ENCODE measurements at regions of chr1 and their contacts with region 1.

Region 1: GRCh38 chr1:11719313-11720032 is 16.5 kb upstream of the AGTRAP start:
- DNase-seq: peak; percentile 71 to 85 (median 77)
- ATAC-seq: peak; percentile 79
- H3K4me3 ChIP-seq: no peak overlapping the region
- H3K27ac ChIP-seq: no peak overlapping the region
- H3K4me1 ChIP-seq: peaks cover 4 to 13% of the 10 kb centered on the region in 2 experiments; a peak in 4 of 5 replicates
- H3K27me3 ChIP-seq: peaks cover 19 to 25% of the 10 kb centered on the region in 2 experiments; a peak in 4 of 5 replicates
- CTCF ChIP-seq: peak; percentile 94 to 99 (median 98)
- EP300 ChIP-seq: 0 out of 2 replicates have a peak, but pooled peaks have one; percentile 6
- POLR2A ChIP-seq: no peak
- RAD21 ChIP-seq: peak; percentile 98 to 99

Region 2: GRCh38 chr1:11037740-11038182 is 681.7 kb before region 1 on chr1:
- CTCF ChIA-PET with region 1: no interaction called
- POLR2A ChIA-PET with region 1: no interaction called
- in situ Hi-C with region 1: no loop called
- intact Hi-C with region 1: loop called (anchors 10 kb)
- DNase-seq: peak; percentile 83 to 91 (median 85)
- ATAC-seq: peak; percentile 98
- H3K4me3 ChIP-seq: no peak overlapping the region
- H3K27ac ChIP-seq: no peak overlapping the region
- H3K4me1 ChIP-seq: no peaks in the 10 kb centered on the region
- H3K27me3 ChIP-seq: peaks cover 8 to 20% of the 10 kb centered on the region in 2 experiments
- CTCF ChIP-seq: peak; percentile 96 to 99 (median 99)
- EP300 ChIP-seq: no peak
- POLR2A ChIP-seq: no peak
- RAD21 ChIP-seq: peak; percentile 97 to 99

Region 3: GRCh38 chr1:11045428-11046269 is 673.8 kb before region 1 on chr1:
- CTCF ChIA-PET with region 1: no interaction called
- POLR2A ChIA-PET with region 1: no interaction called
- in situ Hi-C with region 1: loop called (anchors 5 kb)
- intact Hi-C with region 1: no loop called
- DNase-seq: peak; percentile 55 to 72 (median 67)
- ATAC-seq: peak; percentile 87
- H3K4me3 ChIP-seq: no peak overlapping the region
- H3K27ac ChIP-seq: no peak overlapping the region
- H3K4me1 ChIP-seq: peaks cover 0 to 26% of the 10 kb centered on the region in 2 experiments; a peak in 2 of 5 replicates
- H3K27me3 ChIP-seq: peaks cover 0 to 5% of the 10 kb centered on the region in 2 experiments; a peak in 1 of 5 replicates
- CTCF ChIP-seq: no peak
- EP300 ChIP-seq: no peak
- POLR2A ChIP-seq: no peak
- RAD21 ChIP-seq: no peak

Region 4: GRCh38 chr1:11654137-11654938 is 65.1 kb before region 1 on chr1 and contains the starts of genes FBXO2 and FBXO44:
- CTCF ChIA-PET with region 1: interaction called, 52 read pairs
- POLR2A ChIA-PET with region 1: interaction called, 7 read pairs
- in situ Hi-C with region 1: loop called (anchors 5 kb)
- intact Hi-C with region 1: loop called (anchors 1 kb)
- DNase-seq: peak; percentile 58 to 87 (median 84)
- ATAC-seq: peak; percentile 78
- H3K4me3 ChIP-seq: peak within 1 kb of the TSS; percentile 48
- H3K27ac ChIP-seq: no peak within 1 kb of the TSS
- H3K4me1 ChIP-seq: peaks cover 13 to 49% of the 10 kb centered on the region in 2 experiments; a peak in 4 of 5 replicates
- H3K27me3 ChIP-seq: no peaks in the 10 kb centered on the region
- CTCF ChIP-seq: no peak
- EP300 ChIP-seq: no peak
- POLR2A ChIP-seq: no peak
- RAD21 ChIP-seq: no peak
- polyA plus RNA-seq, gene FBXO2: 0.04 to 0.27 TPM
- polyA plus RNA-seq, gene FBXO44: 0.69 to 1.3 TPM

Region 5: DNA sequence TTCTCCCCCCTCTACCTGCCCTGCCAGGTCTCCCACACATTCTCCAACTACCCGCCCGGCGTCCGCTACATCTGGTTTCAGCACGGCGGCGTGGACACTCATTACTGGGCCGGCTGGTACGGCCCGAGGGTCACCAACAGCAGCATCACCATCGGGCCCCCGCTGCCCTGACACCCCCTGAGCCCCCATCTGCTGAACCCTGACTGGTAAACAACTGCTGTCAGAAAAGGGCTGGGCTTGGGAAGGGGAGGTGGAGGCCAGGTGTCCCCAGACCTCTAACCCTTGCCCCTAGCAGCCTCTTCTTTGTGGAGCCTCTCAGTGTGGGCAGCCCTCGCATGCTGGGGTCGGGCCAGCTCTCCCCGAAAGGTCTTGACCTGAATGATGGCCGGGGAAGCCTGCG is 58.4 kb before region 1 on chr1:
- CTCF ChIA-PET with region 1: interaction called, 17 read pairs
- POLR2A ChIA-PET with region 1: interaction called, 10 read pairs
- in situ Hi-C with region 1: loop called (anchors 5 kb)
- intact Hi-C with region 1: no loop called
- DNase-seq: no peak
- ATAC-seq: no peak
- H3K4me3 ChIP-seq: no peak overlapping the region
- H3K27ac ChIP-seq: no peak overlapping the region
- H3K4me1 ChIP-seq: peaks cover 6 to 36% of the 10 kb centered on the region in 2 experiments; a peak in 4 of 5 replicates
- H3K27me3 ChIP-seq: no peaks in the 10 kb centered on the region
- CTCF ChIP-seq: no peak
- EP300 ChIP-seq: no peak
- POLR2A ChIP-seq: no peak
- RAD21 ChIP-seq: no peak

Region 6: DNA sequence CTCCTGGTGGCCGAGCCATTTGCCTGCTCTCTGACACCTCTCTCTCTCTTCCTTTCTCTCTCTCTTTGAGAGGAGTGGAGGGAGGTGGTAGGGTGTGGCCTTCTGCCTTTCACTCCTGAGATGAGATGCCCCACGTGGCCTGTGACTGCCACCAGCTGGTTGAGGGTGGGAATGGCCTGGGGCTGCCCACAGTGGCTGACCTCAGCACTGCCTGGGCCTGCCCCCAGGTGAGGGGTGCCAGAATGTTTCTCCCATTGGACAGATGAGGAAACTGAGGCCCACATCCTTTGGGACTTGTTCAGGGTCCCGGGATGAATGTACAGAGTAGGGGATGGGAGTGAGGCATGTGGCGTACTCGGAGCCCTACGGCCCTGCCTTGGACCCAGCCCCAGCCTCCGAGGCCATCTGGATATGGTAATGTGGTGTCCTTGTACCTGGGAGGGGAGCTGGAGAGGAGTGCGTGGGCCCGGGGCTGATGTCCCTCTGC is 29.8 kb after region 1 on chr1:
- CTCF ChIA-PET with region 1: interaction called, 3 read pairs
- POLR2A ChIA-PET with region 1: no interaction called
- in situ Hi-C with region 1: no loop called
- intact Hi-C with region 1: loop called (anchors 1 kb)
- DNase-seq: peak; percentile 87 to 94 (median 92)
- ATAC-seq: peak; percentile 94
- H3K4me3 ChIP-seq: no peak overlapping the region
- H3K27ac ChIP-seq: no peak overlapping the region
- H3K4me1 ChIP-seq: peaks cover 29 to 60% of the 10 kb centered on the region in 2 experiments
- H3K27me3 ChIP-seq: no peaks in the 10 kb centered on the region
- CTCF ChIP-seq: peak; percentile 92 to 98 (median 96)
- EP300 ChIP-seq: no peak
- POLR2A ChIP-seq: no peak
- RAD21 ChIP-seq: peak; percentile 94 to 96

Measured in K562 (cell line).